Activated T-helper 1 cell treated with anti-CD3 and anti-CD28 coated beads, Interleukin-12 subunit alpha, Interleukin-12 subunit beta, Interleukin-2, Interleukin-4 antibody, amounts not matched to agents 30 ng/mL and 10 ng/mL and 1 ng/mL, durations not matched to agents 14 hours and 24 hours and 36 hours (primary cell): ENCODE measurements at regions of chr11 and their contacts with region 1.

Region 1: GRCh38 chr11:57657194-57658022 is at the start of gene CLP1:
- DNase-seq: peak; percentile 99
- H3K4me3 Mint-ChIP-seq: peak within 1 kb of the TSS; percentile 96
- H3K27ac Mint-ChIP-seq: peak within 1 kb of the TSS; percentile 95
- H3K4me1 Mint-ChIP-seq: peaks cover 18% of the 10 kb centered on the region
- H3K27me3 Mint-ChIP-seq: no peaks in the 10 kb centered on the region
- total RNA-seq, gene CLP1: 17.8 and 19.1 TPM in 2 replicates

Region 2: GRCh38 chr11:57324886-57325734 is 332.3 kb before region 1 on chr11 and contains the start of gene TNKS1BP1:
- intact Hi-C with region 1: loop called (anchors 5 kb)
- DNase-seq: peak; percentile 86
- H3K4me3 Mint-ChIP-seq: peak within 1 kb of the TSS; percentile 85
- H3K27ac Mint-ChIP-seq: peak within 1 kb of the TSS; percentile 91
- H3K4me1 Mint-ChIP-seq: peaks cover 57% of the 10 kb centered on the region
- H3K27me3 Mint-ChIP-seq: no peaks in the 10 kb centered on the region
- total RNA-seq, gene TNKS1BP1: 22.1 and 24.3 TPM in 2 replicates

Region 3: GRCh38 chr11:57335343-57336110 is 321.9 kb before region 1 on chr11 and contains the start of gene SSRP1:
- intact Hi-C with region 1: loop called (anchors 2 kb)
- DNase-seq: peak; percentile 81
- H3K4me3 Mint-ChIP-seq: peak within 1 kb of the TSS; percentile 92
- H3K27ac Mint-ChIP-seq: peak within 1 kb of the TSS; percentile 99
- H3K4me1 Mint-ChIP-seq: peaks cover 39% of the 10 kb centered on the region
- H3K27me3 Mint-ChIP-seq: peaks cover 1% of the 10 kb centered on the region
- total RNA-seq, gene SSRP1: 235 and 239 TPM in 2 replicates

Region 4: GRCh38 chr11:57800444-57801182 is 143.2 kb after region 1 on chr11:
- intact Hi-C with region 1: loop called (anchors 5 kb)
- DNase-seq: peak; percentile 13
- H3K4me3 Mint-ChIP-seq: no peak overlapping the region
- H3K27ac Mint-ChIP-seq: peak overlapping the region; percentile 26
- H3K4me1 Mint-ChIP-seq: peaks cover 23% of the 10 kb centered on the region
- H3K27me3 Mint-ChIP-seq: no peaks in the 10 kb centered on the region